ENCODE measurements at regions of chr10 and their contacts with region 1.

Region 1: GRCh38 chr10:23656735-23657134 is 217.9 kb downstream of the OTUD1 start:
- DNase-seq: no peak
- H3K4me3 ChIP-seq: no peak overlapping the region
- H3K27ac ChIP-seq: no peak overlapping the region
- H3K4me1 ChIP-seq: no peaks in the 10 kb centered on the region
- H3K27me3 ChIP-seq: no peaks in the 10 kb centered on the region
- CTCF ChIP-seq: peak in 2 of 3 experiments; percentile 60 to 65; a peak in 3 of 4 replicates
- EP300 ChIP-seq: no peak
- POLR2A ChIP-seq: no peak
- RAD21 ChIP-seq: peak; percentile 71 to 79

Region 2: GRCh38 chr10:23535381-23535780 is 121.4 kb before region 1 on chr10:
- CTCF ChIA-PET with region 1: interaction called, 13 read pairs
- POLR2A ChIA-PET with region 1: no interaction called
- DNase-seq: no peak
- H3K4me3 ChIP-seq: no peak overlapping the region
- H3K27ac ChIP-seq: no peak overlapping the region
- H3K4me1 ChIP-seq: no peaks in the 10 kb centered on the region
- H3K27me3 ChIP-seq: no peaks in the 10 kb centered on the region
- CTCF ChIP-seq: peak in 2 of 3 experiments; percentile 12 to 13; a peak in 2 of 4 replicates
- EP300 ChIP-seq: no peak
- POLR2A ChIP-seq: no peak
- RAD21 ChIP-seq: peak; percentile 47 to 50

Region 3: GRCh38 chr10:23571884-23572283 is 84.9 kb before region 1 on chr10:
- CTCF ChIA-PET with region 1: no interaction called
- POLR2A ChIA-PET with region 1: no interaction called
- DNase-seq: no peak
- H3K4me3 ChIP-seq: no peak overlapping the region
- H3K27ac ChIP-seq: no peak overlapping the region
- H3K4me1 ChIP-seq: no peaks in the 10 kb centered on the region
- H3K27me3 ChIP-seq: no peaks in the 10 kb centered on the region; a peak in 1 of 7 replicates
- CTCF ChIP-seq: no peak
- EP300 ChIP-seq: no peak
- POLR2A ChIP-seq: no peak
- RAD21 ChIP-seq: no peak